H1 (cell line): ENCODE measurements at regions of chr3 and their contacts with region 1.

Region 1: GRCh38 chr3:59326246-59327024 is 276.6 kb upstream of the CFAP20DC start:
- DNase-seq: peak in 1 of 2 experiments; percentile 55
- H3K4me3 ChIP-seq: no peak overlapping the region
- H3K27ac ChIP-seq: no peak overlapping the region
- H3K4me1 ChIP-seq: peaks cover 0 to 2% (median 0%) of the 10 kb centered on the region in 4 experiments; a peak in 3 of 7 replicates
- H3K27me3 ChIP-seq: no peaks in the 10 kb centered on the region
- CTCF ChIP-seq: peak; percentile 55 to 82 (median 65)
- EP300 ChIP-seq: no peak
- POLR2A ChIP-seq: no peak
- RAD21 ChIP-seq: peak; percentile 53 to 58

Region 2: GRCh38 chr3:59313365-59313764 is 13.1 kb before region 1 on chr3:
- CTCF ChIA-PET with region 1: interaction called, 10 read pairs
- POLR2A ChIA-PET with region 1: no interaction called
- DNase-seq: peak in 1 of 2 experiments; percentile 76
- H3K4me3 ChIP-seq: no peak overlapping the region
- H3K27ac ChIP-seq: no peak overlapping the region
- H3K4me1 ChIP-seq: no peaks in the 10 kb centered on the region
- H3K27me3 ChIP-seq: no peaks in the 10 kb centered on the region
- CTCF ChIP-seq: peak; percentile 69 to 81 (median 74)
- EP300 ChIP-seq: no peak
- POLR2A ChIP-seq: no peak
- RAD21 ChIP-seq: peak; percentile 84 to 93

Region 3: DNA sequence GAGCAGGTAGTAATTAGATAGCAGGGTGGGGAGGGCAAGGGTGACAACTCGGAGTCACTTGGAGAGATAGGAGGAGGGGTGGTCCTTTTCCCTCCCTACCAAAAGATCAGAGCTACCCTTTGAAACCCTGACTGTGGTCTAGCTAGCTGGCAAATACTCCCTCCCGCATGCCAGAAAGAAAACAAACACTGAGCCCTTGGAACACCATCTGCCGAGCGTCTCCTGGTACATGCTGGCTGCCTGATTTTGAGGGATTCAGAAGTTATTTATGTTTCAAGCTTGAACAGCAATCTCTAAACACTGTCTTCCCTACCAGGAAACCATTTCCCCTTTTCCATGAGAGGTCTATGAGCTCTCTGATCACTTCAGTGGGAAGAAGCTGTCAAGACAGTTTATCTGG is 15.0 kb after region 1 on chr3:
- CTCF ChIA-PET with region 1: interaction called, 12 read pairs
- POLR2A ChIA-PET with region 1: no interaction called
- DNase-seq: no peak
- H3K4me3 ChIP-seq: no peak overlapping the region
- H3K27ac ChIP-seq: no peak overlapping the region
- H3K4me1 ChIP-seq: no peaks in the 10 kb centered on the region
- H3K27me3 ChIP-seq: no peaks in the 10 kb centered on the region
- CTCF ChIP-seq: no peak
- EP300 ChIP-seq: no peak
- POLR2A ChIP-seq: no peak
- RAD21 ChIP-seq: no peak

Region 4: DNA sequence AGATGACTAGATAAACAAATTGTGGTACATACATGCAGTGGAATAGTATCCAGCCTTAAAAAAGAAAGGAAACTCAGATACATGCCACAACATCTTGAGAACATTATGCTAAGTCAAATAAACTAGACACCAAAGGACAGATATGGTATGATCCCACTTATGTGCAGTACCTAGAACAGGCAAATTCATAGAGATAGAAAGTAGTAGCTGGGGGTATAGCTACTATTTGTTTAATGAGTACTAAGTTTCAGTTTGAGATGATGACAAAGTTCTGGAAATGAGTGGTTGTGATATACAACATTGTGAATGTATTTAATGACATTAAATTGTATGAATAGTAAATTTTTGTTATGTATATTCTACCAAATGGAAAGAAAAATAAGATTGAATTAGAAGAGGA is 200.6 kb after region 1 on chr3:
- CTCF ChIA-PET with region 1: no interaction called
- POLR2A ChIA-PET with region 1: no interaction called
- DNase-seq: no peak
- H3K4me3 ChIP-seq: no peak overlapping the region
- H3K27ac ChIP-seq: no peak overlapping the region
- H3K4me1 ChIP-seq: no peaks in the 10 kb centered on the region
- H3K27me3 ChIP-seq: no peaks in the 10 kb centered on the region; a peak in 1 of 7 replicates
- CTCF ChIP-seq: no peak
- EP300 ChIP-seq: no peak
- POLR2A ChIP-seq: no peak
- RAD21 ChIP-seq: no peak